ENCODE measurements at regions of chr14 and their contacts with region 1.

Region 1: GRCh38 chr14:64764641-64765520 is 60.7 kb downstream of the PLEKHG3 start:
- DNase-seq: peak; percentile 75
- H3K4me3 Mint-ChIP-seq: peak overlapping the region; percentile 32
- H3K27ac Mint-ChIP-seq: no peak overlapping the region
- H3K4me1 Mint-ChIP-seq: peaks cover 27% of the 10 kb centered on the region
- H3K27me3 Mint-ChIP-seq: peaks cover 27% of the 10 kb centered on the region
- CTCF ChIP-seq: peak; percentile 86

Region 2: GRCh38 chr14:64540208-64541157 is 224.4 kb before region 1 on chr14 and contains the start of gene HSPA2:
- CTCF ChIA-PET with region 1: no interaction called
- intact Hi-C with region 1: loop called (anchors 5 kb)
- DNase-seq: peak; percentile 98
- H3K4me3 Mint-ChIP-seq: peak within 1 kb of the TSS; percentile 73
- H3K27ac Mint-ChIP-seq: peak within 1 kb of the TSS; percentile 80
- H3K4me1 Mint-ChIP-seq: peaks cover 9% of the 10 kb centered on the region
- H3K27me3 Mint-ChIP-seq: no peaks in the 10 kb centered on the region
- CTCF ChIP-seq: peak; percentile 45
- total RNA-seq, gene HSPA2: 3.6 and 4.1 TPM in 2 replicates

Region 3: GRCh38 chr14:64671591-64671990 is 93.3 kb before region 1 on chr14:
- CTCF ChIA-PET with region 1: interaction called, 6 read pairs
- intact Hi-C with region 1: loop called (anchors 1 kb)
- DNase-seq: no peak
- H3K4me3 Mint-ChIP-seq: no peak overlapping the region
- H3K27ac Mint-ChIP-seq: no peak overlapping the region
- H3K4me1 Mint-ChIP-seq: peaks cover 9% of the 10 kb centered on the region
- H3K27me3 Mint-ChIP-seq: no peaks in the 10 kb centered on the region
- CTCF ChIP-seq: peak; percentile 62

Region 4: GRCh38 chr14:64708148-64709004 is 56.5 kb before region 1 on chr14:
- CTCF ChIA-PET with region 1: interaction called, 4 read pairs
- intact Hi-C with region 1: loop called (anchors 5 kb)
- DNase-seq: peak; percentile 82
- H3K4me3 Mint-ChIP-seq: peak overlapping the region; percentile 61
- H3K27ac Mint-ChIP-seq: peak overlapping the region; percentile 39
- H3K4me1 Mint-ChIP-seq: peaks cover 52% of the 10 kb centered on the region
- H3K27me3 Mint-ChIP-seq: no peaks in the 10 kb centered on the region
- CTCF ChIP-seq: no peak

Region 5: DNA sequence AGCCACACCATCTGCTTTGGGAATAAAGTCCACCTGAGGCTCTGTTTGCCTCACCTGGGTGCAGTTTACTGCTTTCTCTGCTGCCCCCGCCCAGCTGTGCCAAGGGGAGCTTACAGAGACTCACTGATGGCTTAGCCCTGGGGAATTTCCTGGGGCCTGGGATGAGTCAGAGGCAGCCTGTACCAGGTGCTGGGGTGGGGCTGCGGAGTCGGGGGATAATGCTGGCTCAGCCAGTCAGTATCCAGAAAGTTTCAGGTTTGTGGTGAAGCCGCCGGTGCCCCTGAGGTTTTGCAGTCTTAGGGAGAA is 38.3 kb before region 1 on chr14:
- CTCF ChIA-PET with region 1: interaction called, 5 read pairs
- intact Hi-C with region 1: loop called (anchors 5 kb)
- DNase-seq: peak; percentile 88
- H3K4me3 Mint-ChIP-seq: peak overlapping the region; percentile 19
- H3K27ac Mint-ChIP-seq: peak overlapping the region; percentile 69
- H3K4me1 Mint-ChIP-seq: peaks cover 37% of the 10 kb centered on the region
- H3K27me3 Mint-ChIP-seq: no peaks in the 10 kb centered on the region
- CTCF ChIP-seq: no peak

Region 6: DNA sequence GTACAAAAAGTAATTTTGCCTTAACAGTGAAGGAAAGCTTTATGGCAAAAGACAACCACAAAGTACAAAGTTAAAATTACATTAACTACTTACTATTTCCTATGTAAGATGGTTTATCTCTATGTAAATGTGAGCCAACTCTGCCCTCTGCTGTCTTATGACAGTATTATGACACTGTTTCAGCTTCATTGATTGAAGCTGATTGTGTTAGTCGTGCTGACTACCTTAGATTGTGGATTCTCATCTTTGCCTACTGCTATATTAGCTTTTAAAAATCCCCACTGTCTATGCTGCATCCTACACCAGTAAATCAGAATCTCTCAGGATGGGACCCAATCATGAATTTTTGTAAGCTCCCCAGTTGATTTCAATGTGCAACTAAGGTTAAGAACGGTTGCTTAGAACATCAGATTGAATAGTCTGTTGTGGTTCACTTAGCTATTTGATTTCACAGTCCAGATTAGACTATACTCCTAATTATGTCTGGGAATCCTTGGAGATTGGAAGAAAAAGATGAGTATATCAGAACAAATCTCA is 127.0 kb after region 1 on chr14:
- CTCF ChIA-PET with region 1: interaction called, 4 read pairs
- intact Hi-C with region 1: loop called (anchors 5 kb)
- DNase-seq: peak; percentile 40
- H3K4me3 Mint-ChIP-seq: no peak overlapping the region
- H3K27ac Mint-ChIP-seq: no peak overlapping the region
- H3K4me1 Mint-ChIP-seq: no peaks in the 10 kb centered on the region
- H3K27me3 Mint-ChIP-seq: peaks cover 45% of the 10 kb centered on the region
- CTCF ChIP-seq: no peak

Region 7: DNA sequence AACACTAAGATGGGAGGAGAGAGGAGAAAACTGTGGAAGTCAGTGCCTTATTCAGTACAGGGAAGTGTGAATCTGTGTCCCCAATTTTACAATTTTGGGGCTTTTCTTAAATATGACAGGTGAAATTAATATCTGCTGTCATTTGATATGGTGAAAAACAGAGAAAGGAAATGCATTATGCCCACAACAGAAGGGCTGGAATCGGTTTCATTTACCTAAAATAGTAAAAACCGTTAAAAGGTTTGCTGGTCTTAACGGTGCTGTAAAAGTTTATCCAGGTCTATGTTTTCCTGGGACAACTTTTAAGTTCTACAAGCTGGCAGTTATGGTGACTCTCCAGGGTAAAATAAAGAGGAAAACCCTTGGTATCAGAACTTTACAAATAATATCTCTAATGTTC is 958.5 kb after region 1 on chr14:
- CTCF ChIA-PET with region 1: no interaction called
- intact Hi-C with region 1: no loop called
- DNase-seq: no peak
- H3K4me3 Mint-ChIP-seq: no peak overlapping the region
- H3K27ac Mint-ChIP-seq: no peak overlapping the region
- H3K4me1 Mint-ChIP-seq: peaks cover 8% of the 10 kb centered on the region
- H3K27me3 Mint-ChIP-seq: no peaks in the 10 kb centered on the region
- CTCF ChIP-seq: no peak